ENCODE measurements at regions of chr19 and their contacts with region 1.

Region 1: GRCh38 chr19:18281082-18282020 is at the start of gene JUND:
- DNase-seq: peak; percentile 98
- ATAC-seq: peak; percentile 68
- H3K4me3 Mint-ChIP-seq: peak within 1 kb of the TSS; percentile 96
- H3K27ac Mint-ChIP-seq: peak within 1 kb of the TSS; percentile 97
- H3K4me1 Mint-ChIP-seq: peaks cover 54% of the 10 kb centered on the region
- H3K27me3 Mint-ChIP-seq: no peaks in the 10 kb centered on the region
- total RNA-seq, gene JUND: 498 to 501 TPM

Region 2: GRCh38 chr19:18192673-18193387 is 88.5 kb before region 1 on chr19 and contains the start of gene MPV17L2:
- CTCF ChIA-PET with region 1: interaction called, 11 read pairs
- DNase-seq: peak; percentile 100
- ATAC-seq: peak; percentile 94
- H3K4me3 Mint-ChIP-seq: peak within 1 kb of the TSS; percentile 82
- H3K27ac Mint-ChIP-seq: peak within 1 kb of the TSS; percentile 93
- H3K4me1 Mint-ChIP-seq: peaks cover 28% of the 10 kb centered on the region
- H3K27me3 Mint-ChIP-seq: peaks cover 3% of the 10 kb centered on the region
- total RNA-seq, gene MPV17L2: 8.2 to 12.9 TPM

Region 3: DNA sequence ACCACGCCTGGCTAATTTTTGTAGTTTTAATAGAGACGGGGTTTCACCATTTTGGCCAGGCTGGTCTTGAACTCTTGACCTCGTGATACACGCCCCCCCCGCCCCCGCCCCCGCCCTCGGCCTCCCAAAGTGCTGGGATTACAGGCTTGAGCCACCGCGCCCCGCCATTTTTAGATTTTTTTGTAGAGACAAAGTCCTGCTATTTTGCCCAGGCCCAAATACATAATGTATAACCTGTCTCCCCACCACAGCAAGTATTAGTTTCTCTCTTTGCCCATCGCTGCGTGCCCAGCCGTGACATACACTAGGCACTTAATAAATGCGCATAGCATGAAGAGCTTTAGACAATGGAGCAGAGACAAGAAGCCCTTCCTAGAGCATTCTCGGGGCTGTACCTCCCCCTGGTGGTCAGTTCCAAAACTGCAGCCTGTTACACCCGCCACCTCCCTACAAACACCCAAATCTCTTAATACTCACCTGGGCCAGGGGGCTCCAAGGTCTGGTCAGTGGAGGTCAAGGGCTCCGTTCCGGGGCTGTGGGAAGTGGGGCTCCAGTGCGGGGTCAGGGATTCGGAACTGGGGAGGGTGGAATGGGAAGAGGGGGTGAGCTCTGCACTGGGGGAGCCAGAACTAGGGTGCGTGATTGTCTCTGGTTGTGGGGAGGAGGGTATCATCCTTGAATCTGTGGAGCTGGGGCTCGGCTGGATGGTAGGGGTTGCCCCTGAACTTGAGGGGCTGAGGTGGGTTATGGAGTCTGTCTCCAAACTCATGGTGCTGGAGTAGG is 29.6 kb before region 1 on chr19:
- CTCF ChIA-PET with region 1: interaction called, 14 read pairs
- DNase-seq: peak; percentile 85
- ATAC-seq: peak; percentile 87
- H3K4me3 Mint-ChIP-seq: no peak overlapping the region
- H3K27ac Mint-ChIP-seq: no peak overlapping the region
- H3K4me1 Mint-ChIP-seq: peaks cover 3% of the 10 kb centered on the region
- H3K27me3 Mint-ChIP-seq: peaks cover 19% of the 10 kb centered on the region

Region 4: GRCh38 chr19:18291590-18292461 is 10.5 kb after region 1 on chr19:
- CTCF ChIA-PET with region 1: interaction called, 161 read pairs
- DNase-seq: peak; percentile 94
- ATAC-seq: peak; percentile 38
- H3K4me3 Mint-ChIP-seq: peak overlapping the region; percentile 91
- H3K27ac Mint-ChIP-seq: peak overlapping the region; percentile 98
- H3K4me1 Mint-ChIP-seq: peaks cover 67% of the 10 kb centered on the region
- H3K27me3 Mint-ChIP-seq: no peaks in the 10 kb centered on the region

Region 5: GRCh38 chr19:18304458-18305310 is 23.3 kb after region 1 on chr19:
- CTCF ChIA-PET with region 1: interaction called, 399 read pairs
- DNase-seq: peak; percentile 92
- ATAC-seq: peak; percentile 79
- H3K4me3 Mint-ChIP-seq: peak overlapping the region; percentile 94
- H3K27ac Mint-ChIP-seq: peak overlapping the region; percentile 99
- H3K4me1 Mint-ChIP-seq: peaks cover 40% of the 10 kb centered on the region
- H3K27me3 Mint-ChIP-seq: no peaks in the 10 kb centered on the region

Region 6: DNA sequence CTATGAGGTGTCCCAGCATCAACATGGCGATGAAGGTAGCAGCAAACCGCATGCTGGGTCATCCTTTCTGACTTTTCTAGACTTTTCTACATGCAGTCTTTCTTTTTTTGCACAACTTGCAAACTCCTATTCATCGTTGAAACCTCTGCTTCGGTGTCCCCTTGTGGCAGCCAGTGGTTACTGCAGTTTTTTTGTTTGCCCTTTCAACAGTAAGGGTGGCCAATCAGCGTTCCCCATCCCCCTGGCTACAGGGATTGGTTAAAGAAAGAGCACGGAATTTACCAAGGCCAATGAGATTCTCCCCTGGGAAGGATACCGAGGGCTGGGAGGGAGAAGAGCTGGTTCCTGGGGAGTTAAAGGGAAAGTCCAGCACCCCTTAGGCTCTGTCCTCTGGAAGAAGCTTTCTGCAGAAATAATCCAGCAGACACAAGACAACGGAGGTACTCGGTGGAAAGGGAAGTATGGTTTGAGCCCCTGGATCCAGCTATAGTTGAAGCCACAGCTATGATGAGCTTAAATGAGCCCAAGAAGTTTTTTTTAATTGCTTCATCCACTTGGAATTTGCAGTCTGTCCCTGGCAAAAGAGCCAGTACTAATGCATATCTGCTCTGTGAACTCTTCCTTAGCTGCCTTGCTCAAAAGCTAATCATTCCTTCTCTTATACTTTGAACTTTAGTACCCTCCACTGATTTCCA is 47.1 kb after region 1 on chr19:
- CTCF ChIA-PET with region 1: interaction called, 267 read pairs
- DNase-seq: peak; percentile 95
- ATAC-seq: peak; percentile 100
- H3K4me3 Mint-ChIP-seq: peak overlapping the region; percentile 66
- H3K27ac Mint-ChIP-seq: peak overlapping the region; percentile 29
- H3K4me1 Mint-ChIP-seq: peaks cover 23% of the 10 kb centered on the region
- H3K27me3 Mint-ChIP-seq: no peaks in the 10 kb centered on the region

Region 7: DNA sequence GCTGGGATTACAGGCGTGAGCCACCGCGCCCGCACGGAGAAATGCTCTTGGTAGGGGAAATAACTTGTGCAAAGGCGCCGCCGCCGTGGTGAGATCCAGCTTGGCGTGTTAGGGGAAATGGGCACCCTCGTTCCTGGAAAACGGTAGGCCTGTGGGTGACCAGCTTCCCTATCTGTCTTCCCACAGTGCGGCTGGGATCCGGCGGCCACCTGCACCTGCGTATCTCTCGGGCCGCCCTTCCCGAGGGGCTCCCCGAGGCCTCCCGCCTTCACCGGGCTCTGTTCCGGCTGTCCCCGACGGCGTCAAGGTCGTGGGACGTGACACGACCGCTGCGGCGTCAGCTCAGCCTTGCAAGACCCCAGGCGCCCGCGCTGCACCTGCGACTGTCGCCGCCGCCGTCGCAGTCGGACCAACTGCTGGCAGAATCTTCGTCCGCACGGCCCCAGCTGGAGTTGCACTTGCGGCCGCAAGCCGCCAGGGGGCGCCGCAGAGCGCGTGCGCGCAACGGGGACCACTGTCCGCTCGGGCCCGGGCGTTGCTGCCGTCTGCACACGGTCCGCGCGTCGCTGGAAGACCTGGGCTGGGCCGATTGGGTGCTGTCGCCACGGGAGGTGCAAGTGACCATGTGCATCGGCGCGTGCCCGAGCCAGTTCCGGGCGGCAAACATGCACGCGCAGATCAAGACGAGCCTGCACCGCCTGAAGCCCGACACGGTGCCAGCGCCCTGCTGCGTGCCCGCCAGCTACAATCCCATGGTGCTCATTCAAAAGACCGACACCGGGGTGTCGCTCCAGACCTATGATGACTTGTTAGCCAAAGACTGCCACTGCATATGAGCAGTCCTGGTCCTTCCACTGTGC is 107.0 kb after region 1 on chr19:
- CTCF ChIA-PET with region 1: interaction called, 38 read pairs
- DNase-seq: peak; percentile 86
- ATAC-seq: peak; percentile 88
- H3K4me3 Mint-ChIP-seq: peak overlapping the region; percentile 66
- H3K27ac Mint-ChIP-seq: no peak overlapping the region
- H3K4me1 Mint-ChIP-seq: peaks cover 25% of the 10 kb centered on the region
- H3K27me3 Mint-ChIP-seq: peaks cover 59% of the 10 kb centered on the region

Region 8: DNA sequence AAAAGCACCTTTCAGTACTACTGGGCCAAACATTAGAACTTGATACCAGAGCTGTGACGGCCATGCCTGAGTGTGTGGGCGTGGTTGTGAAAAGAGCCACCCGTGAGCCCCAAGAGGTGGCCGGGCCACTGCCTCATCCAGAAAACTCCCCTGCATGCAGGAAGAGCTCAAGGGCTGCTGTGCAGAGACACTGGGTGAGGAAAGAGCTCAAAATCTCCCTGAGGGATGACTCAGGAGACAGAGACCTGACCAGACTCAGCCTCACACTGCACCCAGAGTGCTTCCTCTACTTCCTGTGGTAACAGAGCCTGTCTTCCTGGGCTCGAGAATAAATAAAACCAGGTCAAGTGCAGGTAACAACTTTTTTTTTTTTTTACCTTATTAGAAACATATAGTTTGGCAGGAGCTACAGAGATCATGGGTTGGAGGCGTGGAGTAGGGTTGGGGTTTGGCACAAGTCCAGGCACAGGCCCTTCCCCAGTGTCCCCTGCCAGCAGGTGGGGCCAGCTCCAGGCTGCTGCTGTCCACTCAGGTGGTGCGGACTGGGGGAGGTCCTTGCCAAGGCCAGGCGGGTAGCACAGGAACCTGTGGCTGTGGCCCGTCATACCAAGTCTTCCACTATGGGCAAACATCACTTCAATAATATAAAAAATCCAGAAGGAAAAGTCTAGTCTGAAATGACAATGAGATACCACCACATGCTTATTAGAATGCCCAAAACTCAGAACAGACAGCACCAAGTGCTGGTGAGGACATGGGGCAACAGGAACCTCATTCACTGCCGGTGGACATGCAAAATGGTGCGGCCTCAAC is 215.0 kb after region 1 on chr19:
- CTCF ChIA-PET with region 1: no interaction called
- DNase-seq: peak; percentile 83
- ATAC-seq: peak; percentile 83
- H3K4me3 Mint-ChIP-seq: peak overlapping the region; percentile 57
- H3K27ac Mint-ChIP-seq: peak overlapping the region; percentile 95
- H3K4me1 Mint-ChIP-seq: peaks cover 81% of the 10 kb centered on the region
- H3K27me3 Mint-ChIP-seq: no peaks in the 10 kb centered on the region

Measured in activated CD8-positive, alpha-beta memory T cell treated with anti-CD3 and anti-CD28 coated beads, Interleukin-2, amount 10 ng/mL, durations not matched to agents 7 days and 5 days (primary cell).